Sigmoid colon (tissue), 7 donors: ENCODE measurements at regions of chr12 and their contacts with region 1.

Region 1: DNA sequence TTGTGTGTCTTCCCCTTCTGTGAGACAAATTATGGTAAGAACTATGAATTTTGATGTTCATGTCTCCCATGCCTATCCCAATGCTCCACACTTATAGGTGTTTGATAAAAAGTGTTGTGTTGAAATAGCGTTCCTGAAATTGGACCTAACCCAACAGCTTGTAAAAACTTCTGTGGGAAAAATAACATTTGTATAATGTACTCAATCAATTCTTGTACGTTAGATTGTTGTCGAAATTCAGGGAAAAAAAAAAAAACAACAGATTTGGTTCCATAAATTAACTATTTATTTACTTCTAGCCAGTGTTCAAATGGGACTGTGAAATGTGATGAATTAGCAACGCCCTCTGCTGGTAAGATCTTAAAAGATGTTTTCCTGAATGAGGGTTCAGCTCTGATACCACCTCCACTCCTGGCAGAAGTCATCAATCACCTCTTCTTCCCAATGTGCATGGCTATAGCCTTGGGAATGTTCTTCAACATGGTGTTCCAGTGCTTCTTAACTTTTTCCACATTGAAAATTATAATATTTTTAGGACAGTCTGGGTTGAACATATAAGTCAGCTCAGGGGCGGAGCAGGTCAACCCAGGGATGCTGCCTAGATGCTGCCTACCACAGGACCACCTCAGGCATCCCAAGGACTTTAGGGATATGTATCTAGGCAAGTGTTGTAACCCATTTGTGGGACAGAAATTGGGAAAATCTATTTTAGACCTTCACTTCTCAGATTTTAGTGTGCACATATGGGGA is 170.6 kb downstream of the OTOGL start:
- DNase-seq: no peak
- H3K4me3 ChIP-seq: peak overlapping the region in 1 of 4 donors; percentile 1
- H3K27ac ChIP-seq: no peak overlapping the region
- H3K4me1 ChIP-seq: peaks cover 0 to 9% (median 7%) of the 10 kb centered on the region in 4 donors
- H3K27me3 ChIP-seq: no peaks in the 10 kb centered on the region
- CTCF ChIP-seq: peak; percentile 19 to 63 (median 47)
- EP300 ChIP-seq: no peak
- POLR2A ChIP-seq: no peak

Region 2: DNA sequence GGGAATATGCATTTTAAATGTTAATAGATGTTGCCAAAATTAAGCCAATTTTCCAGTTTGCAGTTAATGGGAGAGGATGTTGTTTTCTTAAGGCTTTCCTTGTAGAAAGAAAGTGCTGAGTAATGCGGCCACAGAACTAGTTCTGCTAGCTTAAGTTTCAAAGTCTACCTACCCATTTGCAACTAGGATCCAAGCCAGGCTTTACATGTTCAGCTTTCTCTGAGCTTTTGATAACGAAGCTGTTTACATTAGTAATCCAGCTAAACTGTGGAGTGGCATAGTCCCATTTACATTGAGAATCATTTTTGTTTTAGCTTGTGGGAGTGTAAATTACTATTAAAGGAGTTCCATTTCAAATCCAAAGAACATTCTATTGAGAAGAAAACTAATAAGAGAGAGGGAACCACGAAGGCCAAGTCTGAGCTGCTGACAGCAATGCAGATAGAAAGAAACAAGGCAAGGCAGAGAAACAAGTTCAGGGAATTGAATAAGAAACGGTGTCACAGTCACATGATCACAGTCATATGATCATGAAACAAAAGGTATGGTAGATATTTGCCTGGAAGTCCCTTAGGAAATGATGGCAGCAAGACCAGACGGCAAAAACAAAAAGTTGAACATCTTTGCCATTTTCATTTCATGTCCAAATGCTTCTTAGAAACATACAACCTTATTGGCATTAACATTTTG is 854.1 kb before region 1 on chr12:
- intact Hi-C with region 1: loop called (anchors 5 kb)
- DNase-seq: no peak
- H3K4me3 ChIP-seq: no peak overlapping the region
- H3K27ac ChIP-seq: no peak overlapping the region
- H3K4me1 ChIP-seq: peaks cover 0 to 34% (median 20%) of the 10 kb centered on the region in 4 donors
- H3K27me3 ChIP-seq: no peaks in the 10 kb centered on the region
- CTCF ChIP-seq: no peak
- EP300 ChIP-seq: no peak
- POLR2A ChIP-seq: no peak

Region 3: GRCh38 chr12:79547735-79548609 is 722.0 kb before region 1 on chr12:
- intact Hi-C with region 1: loop called (anchors 5 kb)
- DNase-seq: no peak
- H3K4me3 ChIP-seq: no peak overlapping the region
- H3K27ac ChIP-seq: peak overlapping the region in 1 of 4 donors; percentile 64
- H3K4me1 ChIP-seq: peaks cover 0 to 24% (median 12%) of the 10 kb centered on the region in 4 donors
- H3K27me3 ChIP-seq: no peaks in the 10 kb centered on the region
- CTCF ChIP-seq: peak; percentile 48 to 71 (median 60)
- EP300 ChIP-seq: no peak
- POLR2A ChIP-seq: no peak

Region 4: GRCh38 chr12:79776111-79776510 is 493.9 kb before region 1 on chr12:
- intact Hi-C with region 1: loop called (anchors 10 kb)
- DNase-seq: no peak
- H3K4me3 ChIP-seq: no peak overlapping the region
- H3K27ac ChIP-seq: peak overlapping the region in 3 of 4 donors; percentile 4 to 40 (median 29)
- H3K4me1 ChIP-seq: peaks cover 0 to 24% (median 11%) of the 10 kb centered on the region in 4 donors
- H3K27me3 ChIP-seq: no peaks in the 10 kb centered on the region
- CTCF ChIP-seq: no peak
- EP300 ChIP-seq: no peak
- POLR2A ChIP-seq: no peak

Region 5: DNA sequence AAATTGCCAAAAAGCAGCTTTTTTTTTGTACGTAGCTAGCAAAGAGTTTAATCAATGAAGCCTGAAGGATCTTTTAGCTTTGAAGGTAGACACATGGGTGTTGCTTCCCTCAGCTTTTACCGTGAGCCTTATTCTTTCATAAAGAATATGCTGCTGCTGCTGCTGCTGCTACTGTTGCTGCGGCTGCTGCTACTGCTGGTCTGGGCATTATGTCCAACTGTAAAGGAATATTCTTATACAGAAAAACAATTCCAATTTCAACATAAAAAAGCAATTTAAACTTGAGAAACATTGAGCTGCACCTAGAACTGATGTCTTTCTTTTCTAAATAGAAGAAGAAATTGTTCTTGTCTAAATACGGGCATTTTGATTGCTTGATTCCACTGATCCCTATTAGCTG is 296.2 kb before region 1 on chr12:
- intact Hi-C with region 1: loop called (anchors 10 kb)
- DNase-seq: no peak
- H3K4me3 ChIP-seq: peak overlapping the region in 2 of 4 donors; percentile 14 to 16
- H3K27ac ChIP-seq: peak overlapping the region; percentile 63 to 75 (median 66)
- H3K4me1 ChIP-seq: peaks cover 0 to 26% (median 21%) of the 10 kb centered on the region in 4 donors
- H3K27me3 ChIP-seq: no peaks in the 10 kb centered on the region
- CTCF ChIP-seq: no peak
- EP300 ChIP-seq: no peak
- POLR2A ChIP-seq: no peak

Region 6: DNA sequence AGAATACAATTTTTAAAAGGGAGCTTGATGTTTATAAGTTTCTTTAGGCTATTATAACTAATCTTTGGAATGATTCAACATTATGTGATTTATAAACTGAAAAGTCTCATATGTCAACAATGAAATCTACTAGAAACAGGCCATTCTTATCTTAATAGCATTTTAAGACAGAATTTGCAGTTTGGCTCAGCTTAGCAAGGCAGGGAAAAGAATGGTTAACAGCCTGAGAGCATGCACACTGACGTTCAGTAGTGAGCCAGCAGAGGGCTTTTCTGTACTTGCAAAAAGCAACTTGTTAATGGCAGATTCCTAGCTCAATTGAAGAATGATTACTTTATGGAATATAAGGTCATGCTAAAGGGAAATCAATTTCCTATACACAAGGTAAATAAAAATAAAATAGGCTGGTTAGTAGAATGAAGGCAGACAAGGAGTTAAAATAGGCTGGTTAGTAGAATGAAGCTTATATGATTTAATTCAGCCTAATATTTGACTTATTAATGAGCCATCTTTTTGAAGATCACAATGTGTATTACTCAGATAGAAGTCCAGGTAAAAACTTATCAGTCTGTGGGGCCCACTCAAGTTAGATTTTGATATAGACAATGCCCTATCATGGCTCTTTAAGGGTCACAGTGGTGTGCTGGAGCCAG is 74.8 kb before region 1 on chr12:
- intact Hi-C with region 1: loop called (anchors 5 kb)
- DNase-seq: no peak
- H3K4me3 ChIP-seq: no peak overlapping the region
- H3K27ac ChIP-seq: no peak overlapping the region
- H3K4me1 ChIP-seq: peaks cover 0 to 8% (median 0%) of the 10 kb centered on the region in 4 donors
- H3K27me3 ChIP-seq: no peaks in the 10 kb centered on the region
- CTCF ChIP-seq: peak in 3 of 4 experiments; percentile 17 to 65 (median 55)
- EP300 ChIP-seq: no peak
- POLR2A ChIP-seq: no peak

Region 7: DNA sequence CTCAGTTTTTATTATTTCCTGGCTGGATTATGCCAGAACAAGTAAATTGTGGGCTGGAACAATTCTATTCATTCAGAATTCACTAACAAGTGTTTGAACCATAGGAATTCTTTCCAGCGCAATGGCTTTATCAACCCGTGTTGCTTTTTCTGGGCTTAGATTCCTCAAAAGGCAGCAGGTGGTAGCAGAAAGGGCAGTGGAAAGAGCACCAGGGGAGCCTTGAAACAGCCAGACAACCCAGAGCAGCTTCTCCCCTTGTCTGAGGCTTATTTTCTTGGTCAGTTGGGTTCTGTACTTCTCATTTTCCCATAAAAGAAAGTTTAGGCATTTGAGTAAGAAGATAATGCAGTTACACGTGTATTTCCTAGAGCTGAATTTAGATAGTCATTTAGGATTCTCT is 39.9 kb before region 1 on chr12:
- intact Hi-C with region 1: no loop called
- DNase-seq: no peak
- H3K4me3 ChIP-seq: no peak overlapping the region
- H3K27ac ChIP-seq: no peak overlapping the region
- H3K4me1 ChIP-seq: no peaks in the 10 kb centered on the region
- H3K27me3 ChIP-seq: no peaks in the 10 kb centered on the region
- CTCF ChIP-seq: no peak
- EP300 ChIP-seq: no peak
- POLR2A ChIP-seq: no peak

Region 8: DNA sequence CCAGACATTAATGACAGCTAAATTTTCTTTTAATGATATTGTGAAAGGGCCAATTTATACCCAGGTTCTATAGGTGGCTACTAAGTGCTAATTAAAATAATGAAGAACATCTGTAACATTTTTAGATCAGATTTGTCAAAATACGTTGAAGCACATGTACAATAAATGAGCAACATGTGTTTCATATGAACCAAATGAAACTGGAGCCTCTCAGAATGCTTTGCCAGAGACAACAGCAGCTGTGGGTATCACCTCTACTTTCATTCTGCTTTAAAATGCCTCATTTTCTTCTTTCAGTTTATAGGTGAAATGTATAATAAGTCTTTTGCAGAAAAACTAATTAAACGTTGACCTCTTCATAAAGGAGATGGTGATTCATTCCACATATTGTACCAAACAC is 411.3 kb after region 1 on chr12:
- intact Hi-C with region 1: no loop called
- DNase-seq: no peak
- H3K4me3 ChIP-seq: no peak overlapping the region
- H3K27ac ChIP-seq: no peak overlapping the region
- H3K4me1 ChIP-seq: no peaks in the 10 kb centered on the region
- H3K27me3 ChIP-seq: no peaks in the 10 kb centered on the region
- CTCF ChIP-seq: no peak
- EP300 ChIP-seq: no peak
- POLR2A ChIP-seq: no peak